Heart left ventricle (tissue), 16 donors: ENCODE measurements at regions of chr11 and their contacts with region 1.

Region 1: GRCh38 chr11:60841797-60842667 is at the start of gene CCDC86:
- DNase-seq: peak; percentile 96 to 98 (median 97)
- ATAC-seq: peak; percentile 95 to 98 (median 95)
- H3K4me3 ChIP-seq: peak within 1 kb of the TSS; percentile 36 to 94 (median 81)
- H3K27ac ChIP-seq: peak within 1 kb of the TSS; percentile 60 to 91 (median 78)
- H3K4me1 ChIP-seq: peaks cover 3 to 51% (median 32%) of the 10 kb centered on the region in 12 donors
- H3K27me3 ChIP-seq: no peaks in the 10 kb centered on the region
- CTCF ChIP-seq: no peak
- POLR2A ChIP-seq: peak in 1 of 2 donors; percentile 60
- total RNA-seq, gene CCDC86: 6.0 to 26.7 (median 10.1) TPM

Region 2: GRCh38 chr11:60561254-60561653 is 280.8 kb before region 1 on chr11:
- intact Hi-C with region 1: no loop called
- DNase-seq: no peak
- ATAC-seq: no peak
- H3K4me3 ChIP-seq: no peak overlapping the region
- H3K27ac ChIP-seq: no peak overlapping the region
- H3K4me1 ChIP-seq: no peaks in the 10 kb centered on the region
- H3K27me3 ChIP-seq: no peaks in the 10 kb centered on the region
- CTCF ChIP-seq: no peak
- POLR2A ChIP-seq: no peak

Region 3: DNA sequence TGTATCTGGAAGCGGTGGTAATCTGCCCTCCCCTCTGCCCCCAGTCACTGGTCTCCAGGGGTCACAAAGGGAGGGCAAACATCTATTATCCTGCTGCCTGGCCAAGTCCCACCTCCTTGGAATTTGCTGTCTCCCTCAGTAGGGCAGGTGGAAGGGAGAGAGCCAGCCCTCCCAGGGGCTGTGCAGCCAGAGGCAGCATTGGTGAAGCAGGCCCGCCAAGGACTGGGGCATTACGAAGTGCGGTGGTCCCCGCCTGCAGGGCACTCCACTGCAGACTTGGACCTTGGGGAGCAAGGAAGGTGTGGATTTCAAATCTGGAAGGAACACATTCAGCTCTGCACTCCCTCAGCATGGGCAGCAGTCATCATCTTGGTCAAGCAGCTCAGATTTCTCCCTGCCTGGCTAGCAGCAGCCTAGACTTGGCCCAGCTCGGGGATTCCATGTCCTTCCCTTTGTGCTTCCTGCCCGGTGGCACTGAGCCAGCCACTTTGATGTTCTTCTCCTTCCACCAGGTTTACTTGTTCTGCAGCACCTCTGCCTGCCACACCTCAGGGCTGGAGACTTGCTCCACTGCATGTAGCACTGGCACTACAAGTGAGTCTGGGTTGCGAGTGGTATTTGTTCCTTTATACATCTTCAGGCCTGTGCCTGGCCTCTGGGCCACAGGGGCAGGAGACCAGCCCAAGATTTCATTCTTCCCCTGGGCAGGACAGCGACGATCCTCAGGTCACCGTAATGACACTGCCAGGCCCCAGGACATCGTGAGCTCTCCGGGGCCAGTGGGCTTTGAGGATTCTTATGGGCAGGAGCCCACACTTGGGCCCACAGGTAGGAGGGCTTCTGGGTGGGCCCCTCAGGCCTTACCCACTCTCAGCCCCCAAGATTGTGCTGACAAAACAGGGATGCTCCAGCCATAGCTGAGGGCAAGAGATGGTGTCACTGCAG is 32.7 kb after region 1 on chr11:
- intact Hi-C with region 1: loop called in 3 of 10 experiments (anchors 5 kb)
- DNase-seq: peak in 1 of 5 donors; percentile 17
- ATAC-seq: no peak
- H3K4me3 ChIP-seq: no peak overlapping the region
- H3K27ac ChIP-seq: peak overlapping the region in 1 of 12 donors; percentile 14
- H3K4me1 ChIP-seq: peaks cover 5 to 64% (median 32%) of the 10 kb centered on the region in 12 donors
- H3K27me3 ChIP-seq: no peaks in the 10 kb centered on the region
- CTCF ChIP-seq: no peak
- POLR2A ChIP-seq: no peak

Region 4: GRCh38 chr11:60906132-60906972 is 64.3 kb after region 1 on chr11 and contains the start of gene PRPF19:
- intact Hi-C with region 1: loop called in 1 of 10 experiments (anchors 2 kb)
- DNase-seq: peak; percentile 97 to 98 (median 97)
- ATAC-seq: peak; percentile 96 to 98 (median 97)
- H3K4me3 ChIP-seq: peak within 1 kb of the TSS; percentile 73 to 99 (median 94)
- H3K27ac ChIP-seq: peak within 1 kb of the TSS; percentile 72 to 98 (median 94)
- H3K4me1 ChIP-seq: peaks cover 8 to 48% (median 28%) of the 10 kb centered on the region in 12 donors
- H3K27me3 ChIP-seq: no peaks in the 10 kb centered on the region
- CTCF ChIP-seq: peak in 1 of 12 donors; percentile 4
- POLR2A ChIP-seq: peak in 1 of 2 donors; percentile 72
- total RNA-seq, gene PRPF19: 30.8 to 72.0 (median 40.8) TPM

Region 5: GRCh38 chr11:60957188-60957587 is 115.2 kb after region 1 on chr11:
- intact Hi-C with region 1: loop called in 1 of 10 experiments (anchors 5 kb)
- DNase-seq: no peak
- ATAC-seq: peak in 1 of 4 donors; percentile 59
- H3K4me3 ChIP-seq: no peak overlapping the region
- H3K27ac ChIP-seq: no peak overlapping the region
- H3K4me1 ChIP-seq: peaks cover 0 to 32% (median 3%) of the 10 kb centered on the region in 12 donors
- H3K27me3 ChIP-seq: peaks cover 0 to 6% (median 0%) of the 10 kb centered on the region in 9 donors
- CTCF ChIP-seq: no peak
- POLR2A ChIP-seq: no peak